ENCODE measurements at regions of chr1 and their contacts with region 1.

Region 1: GRCh38 chr1:41927128-41927737 is 8.5 kb upstream of the HIVEP3 start:
- DNase-seq: no peak
- H3K4me3 ChIP-seq: no peak overlapping the region
- H3K27ac ChIP-seq: no peak overlapping the region
- H3K4me1 ChIP-seq: no peaks in the 10 kb centered on the region
- H3K27me3 ChIP-seq: no peaks in the 10 kb centered on the region
- CTCF ChIP-seq: no peak
- EP300 ChIP-seq: no peak
- POLR2A ChIP-seq: no peak

Region 2: GRCh38 chr1:41882068-41882477 is 45.2 kb before region 1 on chr1:
- in situ Hi-C with region 1: no loop called
- intact Hi-C with region 1: loop called (anchors 1 kb)
- DNase-seq: peak; percentile 39
- H3K4me3 ChIP-seq: no peak overlapping the region
- H3K27ac ChIP-seq: peak overlapping the region in 3 of 4 donors; percentile 17 to 42 (median 31)
- H3K4me1 ChIP-seq: peaks cover 0 to 14% (median 11%) of the 10 kb centered on the region in 4 donors
- H3K27me3 ChIP-seq: no peaks in the 10 kb centered on the region
- CTCF ChIP-seq: no peak
- EP300 ChIP-seq: no peak
- POLR2A ChIP-seq: no peak

Measured in transverse colon (tissue), 4 donors.